ENCODE measurements at regions of chr6 and their contacts with region 1.

Region 1: DNA sequence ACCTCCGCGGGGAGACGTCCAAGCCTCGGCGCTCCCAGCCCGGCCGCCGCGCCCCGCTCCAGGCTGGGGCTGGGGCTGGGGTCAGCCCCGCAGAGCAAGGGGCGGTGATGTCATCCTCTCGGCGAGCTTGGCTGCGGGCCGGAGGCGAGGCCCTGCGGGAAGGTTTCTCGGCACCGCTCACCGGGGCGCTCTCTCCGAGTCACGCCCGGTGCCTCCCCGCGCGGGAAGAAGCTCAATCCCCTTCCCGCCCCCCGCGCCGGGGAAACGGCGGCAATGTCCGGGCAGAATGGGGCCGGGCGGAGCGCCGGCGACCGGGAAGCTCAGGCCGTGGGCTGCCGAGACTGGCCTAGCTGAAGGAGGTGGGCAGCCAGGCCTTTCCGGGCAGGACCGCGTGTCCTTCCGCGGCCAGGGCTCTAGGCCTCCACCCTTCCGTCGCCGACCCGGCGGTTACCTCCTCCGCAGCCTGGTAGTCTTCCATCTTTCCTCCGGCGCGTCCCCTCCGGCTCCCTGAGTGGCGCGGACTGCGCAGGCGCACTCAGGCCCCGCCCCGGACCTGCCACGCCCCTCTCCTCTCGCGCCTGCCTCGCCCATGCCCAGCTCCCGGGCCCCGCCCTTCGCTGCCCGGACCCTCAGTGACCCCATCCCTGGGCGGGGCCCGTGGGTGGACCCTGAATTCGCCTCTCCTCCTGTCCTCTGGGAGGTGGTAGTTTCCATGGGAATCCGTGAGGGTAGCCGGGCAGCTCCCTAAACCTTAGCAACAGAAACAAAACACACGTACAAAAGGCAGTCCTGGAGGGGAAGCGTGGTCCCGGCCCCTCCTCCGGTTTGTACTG is at the start of gene DYNLT1:
- DNase-seq: peak; percentile 71
- ATAC-seq: peak; percentile 71
- H3K4me3 ChIP-seq: peak within 1 kb of the TSS; percentile 81
- H3K27ac ChIP-seq: peak within 1 kb of the TSS; percentile 82
- H3K4me1 ChIP-seq: peaks cover 26% of the 10 kb centered on the region
- H3K27me3 ChIP-seq: no peaks in the 10 kb centered on the region
- CTCF ChIP-seq: no peak
- EP300 ChIP-seq: no peak
- POLR2A ChIP-seq: peak; percentile 97
- RAD21 ChIP-seq: no peak
- polyA plus RNA-seq, gene DYNLT1: 246 to 298 TPM

Region 2: DNA sequence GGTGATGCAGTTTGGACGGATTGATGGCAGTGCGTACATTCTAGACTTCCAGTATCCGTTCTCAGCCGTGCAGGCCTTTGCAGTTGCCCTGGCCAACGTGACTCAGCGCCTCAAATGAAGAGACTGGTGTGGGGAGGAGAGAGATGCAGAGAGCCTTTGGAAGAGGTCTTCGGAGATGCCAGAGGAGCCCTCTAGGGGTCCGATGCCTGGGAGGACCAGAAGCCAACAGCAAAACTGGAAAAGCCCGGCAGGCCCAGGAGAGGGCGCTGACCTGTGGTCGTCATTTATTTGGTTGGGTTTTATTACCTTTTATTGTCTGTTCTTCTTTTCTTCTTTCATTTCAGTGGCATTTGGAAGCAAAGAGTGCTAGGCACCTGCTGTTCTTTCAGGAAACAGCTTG is 137.9 kb before region 1 on chr6:
- CTCF ChIA-PET with region 1: no interaction called
- POLR2A ChIA-PET with region 1: no interaction called
- RAD21 ChIA-PET with region 1: no interaction called
- SMC1A ChIA-PET with region 1: no interaction called
- in situ Hi-C with region 1: no loop called
- intact Hi-C with region 1: no loop called
- DNase-seq: no peak
- ATAC-seq: no peak
- H3K4me3 ChIP-seq: no peak overlapping the region
- H3K27ac ChIP-seq: no peak overlapping the region
- H3K4me1 ChIP-seq: no peaks in the 10 kb centered on the region
- H3K27me3 ChIP-seq: no peaks in the 10 kb centered on the region
- CTCF ChIP-seq: no peak
- EP300 ChIP-seq: no peak
- POLR2A ChIP-seq: no peak
- RAD21 ChIP-seq: no peak

Region 3: DNA sequence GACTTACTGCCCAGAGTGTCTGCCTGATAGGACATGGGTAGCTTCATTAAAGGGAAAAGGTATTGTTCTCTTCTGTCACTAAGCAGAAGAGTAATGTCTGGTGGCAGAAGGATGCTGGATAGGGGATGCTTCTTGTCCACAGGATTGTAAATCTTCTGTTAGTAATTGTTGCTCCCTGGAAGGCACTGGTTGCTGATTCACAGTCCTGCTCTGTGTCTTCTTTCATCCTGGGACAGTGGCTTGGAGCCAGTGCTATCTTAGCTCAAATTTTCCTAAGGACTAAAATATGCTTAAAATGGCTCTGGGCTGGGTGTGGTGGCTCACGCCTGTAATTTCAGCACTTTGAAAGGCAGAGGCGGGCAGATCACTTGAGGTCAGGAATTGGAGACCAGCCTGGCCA is 53.4 kb after region 1 on chr6:
- CTCF ChIA-PET with region 1: interaction called, 3 read pairs
- POLR2A ChIA-PET with region 1: no interaction called
- RAD21 ChIA-PET with region 1: no interaction called
- SMC1A ChIA-PET with region 1: interaction called, 5 read pairs
- in situ Hi-C with region 1: no loop called
- intact Hi-C with region 1: loop called (anchors 5 kb)
- DNase-seq: no peak
- ATAC-seq: no peak
- H3K4me3 ChIP-seq: no peak overlapping the region
- H3K27ac ChIP-seq: no peak overlapping the region
- H3K4me1 ChIP-seq: no peaks in the 10 kb centered on the region
- H3K27me3 ChIP-seq: no peaks in the 10 kb centered on the region
- CTCF ChIP-seq: no peak
- EP300 ChIP-seq: no peak
- POLR2A ChIP-seq: no peak
- RAD21 ChIP-seq: no peak

Measured in GM12878 (cell line).